ENCODE measurements at regions of chr4 and their contacts with region 1.

Region 1: DNA sequence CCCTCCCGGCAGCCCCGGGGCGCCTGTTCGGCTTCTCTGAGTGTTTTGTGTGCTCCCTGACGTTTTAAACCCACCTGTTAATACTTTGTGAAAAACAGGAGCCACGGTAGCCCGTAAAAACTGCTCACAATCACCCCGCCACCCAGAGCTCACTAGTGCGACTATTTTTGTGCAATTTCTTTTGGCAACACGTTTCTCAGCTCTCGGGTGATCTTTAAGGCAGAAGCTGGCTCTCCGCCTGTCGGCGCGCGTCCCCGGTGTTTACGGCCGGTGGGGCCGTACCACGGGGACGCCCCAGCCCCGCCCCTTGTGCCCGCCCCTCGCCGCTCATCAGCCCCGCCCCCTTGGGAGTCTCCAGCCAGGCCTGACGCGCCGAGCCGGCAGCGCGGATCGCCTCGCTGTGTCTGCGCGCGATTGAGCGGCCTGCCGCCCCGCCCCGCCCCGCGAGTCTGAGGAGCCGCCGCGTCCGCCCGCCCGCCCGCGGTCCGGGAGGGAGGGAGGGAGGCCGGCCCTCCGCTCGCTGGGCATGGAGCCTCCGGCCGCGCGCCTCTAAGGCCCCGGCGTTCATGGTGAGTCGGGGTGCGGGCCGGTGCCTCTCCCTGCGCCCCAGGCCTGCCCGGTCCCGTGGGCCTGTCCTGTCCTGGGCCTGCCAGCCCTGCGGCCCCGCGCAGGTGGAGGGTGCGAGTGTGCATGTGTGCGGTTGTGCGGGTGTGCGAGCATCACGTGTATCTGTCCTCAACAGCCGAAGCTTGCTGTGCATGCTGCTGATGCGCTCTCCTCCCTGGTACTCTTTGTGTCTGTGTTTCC is 56.2 kb upstream of the TADA2B start:
- DNase-seq: peak; percentile 88 to 98 (median 92)
- ATAC-seq: peak; percentile 90
- H3K4me3 ChIP-seq: peak overlapping the region; percentile 88
- H3K4me3 Mint-ChIP-seq: peak overlapping the region; percentile 97
- H3K27ac ChIP-seq: peak overlapping the region; percentile 78 to 93
- H3K27ac Mint-ChIP-seq: peak overlapping the region; percentile 95
- H3K4me1 ChIP-seq: peaks cover 64% of the 10 kb centered on the region
- H3K4me1 Mint-ChIP-seq: peaks cover 67% of the 10 kb centered on the region
- H3K27me3 ChIP-seq: no peaks in the 10 kb centered on the region
- H3K27me3 Mint-ChIP-seq: no peaks in the 10 kb centered on the region
- CTCF ChIP-seq: no peak

Region 2: GRCh38 chr4:6343950-6344408 is 643.0 kb before region 1 on chr4:
- CTCF ChIA-PET with region 1: no interaction called
- POLR2A ChIA-PET with region 1: no interaction called
- intact Hi-C with region 1: no loop called
- DNase-seq: no peak
- ATAC-seq: no peak
- H3K4me3 ChIP-seq: no peak overlapping the region
- H3K4me3 Mint-ChIP-seq: no peak overlapping the region
- H3K27ac ChIP-seq: no peak overlapping the region
- H3K27ac Mint-ChIP-seq: no peak overlapping the region
- H3K4me1 ChIP-seq: peaks cover 4% of the 10 kb centered on the region
- H3K4me1 Mint-ChIP-seq: no peaks in the 10 kb centered on the region
- H3K27me3 ChIP-seq: peaks cover 3 to 5% of the 10 kb centered on the region in 2 experiments
- H3K27me3 Mint-ChIP-seq: peaks cover 23% of the 10 kb centered on the region
- CTCF ChIP-seq: no peak

Region 3: DNA sequence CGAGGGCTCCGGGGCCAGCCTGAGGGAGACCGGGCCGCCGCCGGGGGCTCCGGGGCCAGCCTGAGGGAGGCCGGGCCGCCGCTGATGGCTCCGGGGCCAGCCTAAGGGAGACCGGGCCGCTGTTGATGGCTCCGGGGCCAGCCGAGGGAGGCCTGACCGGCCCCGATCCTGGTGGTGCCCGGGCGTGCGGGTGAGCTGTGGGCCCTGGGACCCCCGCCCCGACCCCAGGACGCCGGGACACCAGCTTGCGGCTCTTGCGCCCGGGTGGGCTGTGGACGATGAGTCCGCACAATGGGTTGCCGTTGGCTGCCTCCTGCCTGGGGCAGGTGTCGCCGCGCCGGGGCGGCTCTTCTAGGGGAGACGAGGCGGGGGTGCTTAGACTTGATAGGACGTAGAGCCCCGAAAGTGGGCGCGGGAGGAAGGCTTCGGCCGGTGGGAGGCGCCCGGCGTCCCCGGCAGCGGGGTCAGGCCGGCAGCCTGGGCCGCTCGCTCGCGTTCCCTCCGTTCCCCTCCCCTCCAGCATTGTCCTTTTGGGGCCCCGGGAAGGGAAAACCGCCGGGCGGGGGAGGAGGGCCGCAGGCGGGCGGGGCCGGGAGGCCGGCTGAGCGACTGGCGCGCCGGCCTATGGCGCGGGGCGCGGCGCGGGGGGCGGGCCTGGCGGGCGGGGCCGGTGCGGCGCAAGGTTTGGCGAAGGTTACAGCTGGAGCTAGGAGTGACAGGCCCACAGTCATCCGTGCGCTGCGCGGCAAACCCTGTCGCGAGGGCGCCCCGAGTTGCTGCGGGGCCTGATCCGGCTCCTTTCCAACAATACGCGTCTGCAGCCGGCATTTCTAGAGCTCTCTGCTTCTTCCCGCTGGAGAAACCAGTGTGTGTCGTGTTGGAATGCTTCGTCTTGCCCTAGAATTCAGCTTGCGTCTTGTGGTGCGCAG is 203.7 kb before region 1 on chr4:
- CTCF ChIA-PET with region 1: no interaction called
- POLR2A ChIA-PET with region 1: interaction called, 5 read pairs
- intact Hi-C with region 1: loop called in 1 of 2 experiments (anchors 2 kb)
- DNase-seq: peak; percentile 78 to 94 (median 86)
- ATAC-seq: peak; percentile 78
- H3K4me3 ChIP-seq: peak overlapping the region; percentile 77
- H3K4me3 Mint-ChIP-seq: peak overlapping the region; percentile 92
- H3K27ac ChIP-seq: peak overlapping the region; percentile 92 to 96
- H3K27ac Mint-ChIP-seq: peak overlapping the region; percentile 86
- H3K4me1 ChIP-seq: peaks cover 43% of the 10 kb centered on the region
- H3K4me1 Mint-ChIP-seq: peaks cover 59% of the 10 kb centered on the region
- H3K27me3 ChIP-seq: no peaks in the 10 kb centered on the region
- H3K27me3 Mint-ChIP-seq: no peaks in the 10 kb centered on the region
- CTCF ChIP-seq: no peak

Region 4: GRCh38 chr4:6909073-6909965 is 77.7 kb before region 1 on chr4 and contains the start of gene TBC1D14:
- CTCF ChIA-PET with region 1: interaction called, 8 read pairs
- POLR2A ChIA-PET with region 1: interaction called, 78 read pairs
- intact Hi-C with region 1: loop called (anchors 1 kb)
- DNase-seq: peak; percentile 77 to 93 (median 84)
- ATAC-seq: peak; percentile 88
- H3K4me3 ChIP-seq: peak within 1 kb of the TSS; percentile 91
- H3K4me3 Mint-ChIP-seq: peak within 1 kb of the TSS; percentile 96
- H3K27ac ChIP-seq: peak within 1 kb of the TSS; percentile 92 to 96
- H3K27ac Mint-ChIP-seq: peak within 1 kb of the TSS; percentile 90
- H3K4me1 ChIP-seq: peaks cover 61% of the 10 kb centered on the region
- H3K4me1 Mint-ChIP-seq: peaks cover 48% of the 10 kb centered on the region
- H3K27me3 ChIP-seq: no peaks in the 10 kb centered on the region
- H3K27me3 Mint-ChIP-seq: no peaks in the 10 kb centered on the region
- CTCF ChIP-seq: no peak
- total RNA-seq, gene TBC1D14: 31.2 to 34.1 TPM

Region 5: GRCh38 chr4:6926681-6927478 is 60.1 kb before region 1 on chr4:
- CTCF ChIA-PET with region 1: interaction called, 3 read pairs
- POLR2A ChIA-PET with region 1: interaction called, 14 read pairs
- intact Hi-C with region 1: no loop called
- DNase-seq: peak; percentile 42 to 85 (median 67)
- ATAC-seq: peak; percentile 97
- H3K4me3 ChIP-seq: peak overlapping the region; percentile 10
- H3K4me3 Mint-ChIP-seq: peak overlapping the region; percentile 83
- H3K27ac ChIP-seq: peak overlapping the region; percentile 28 to 57
- H3K27ac Mint-ChIP-seq: peak overlapping the region; percentile 92
- H3K4me1 ChIP-seq: peaks cover 79% of the 10 kb centered on the region
- H3K4me1 Mint-ChIP-seq: peaks cover 81% of the 10 kb centered on the region
- H3K27me3 ChIP-seq: no peaks in the 10 kb centered on the region
- H3K27me3 Mint-ChIP-seq: no peaks in the 10 kb centered on the region
- CTCF ChIP-seq: no peak

Region 6: DNA sequence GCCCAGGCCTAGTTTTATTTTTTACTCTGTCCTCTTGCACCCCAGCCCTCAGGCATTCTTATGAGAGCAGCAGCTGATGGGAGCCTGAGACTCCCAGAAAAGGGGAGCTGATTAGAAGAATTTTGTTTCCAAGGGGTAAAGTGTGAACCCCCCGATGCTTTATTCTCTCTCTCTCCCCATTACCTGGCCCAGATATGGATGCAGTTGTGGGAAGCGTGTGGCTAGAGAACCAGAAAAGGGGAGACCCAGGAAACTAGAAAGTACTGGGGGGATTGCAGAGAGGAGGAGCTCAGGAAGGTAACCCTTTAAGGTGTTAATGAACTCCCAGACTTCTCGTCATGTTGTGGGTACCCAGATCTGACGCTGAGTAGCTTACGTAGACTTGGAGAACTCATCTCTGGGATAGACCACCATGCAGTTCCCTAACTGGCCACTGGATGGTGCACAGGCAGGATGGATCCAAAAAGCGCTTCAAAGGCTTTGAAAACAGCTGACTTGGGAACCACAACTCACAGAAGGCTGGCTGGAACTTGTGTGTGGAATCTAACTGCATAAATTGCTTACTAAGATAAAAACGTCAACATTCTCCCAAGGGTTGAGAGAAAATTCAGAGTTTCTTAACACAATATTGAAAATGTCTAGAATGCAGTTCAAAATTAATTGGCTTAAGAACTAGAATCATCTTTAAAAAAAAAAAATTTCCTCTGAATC is 12.7 kb before region 1 on chr4:
- CTCF ChIA-PET with region 1: interaction called, 24 read pairs
- POLR2A ChIA-PET with region 1: interaction called, 14 read pairs
- intact Hi-C with region 1: no loop called
- DNase-seq: peak; percentile 56 to 89 (median 77)
- ATAC-seq: peak; percentile 98
- H3K4me3 ChIP-seq: no peak overlapping the region
- H3K4me3 Mint-ChIP-seq: no peak overlapping the region
- H3K27ac ChIP-seq: no peak overlapping the region
- H3K27ac Mint-ChIP-seq: peak overlapping the region; percentile 49
- H3K4me1 ChIP-seq: peaks cover 6% of the 10 kb centered on the region
- H3K4me1 Mint-ChIP-seq: peaks cover 15% of the 10 kb centered on the region
- H3K27me3 ChIP-seq: no peaks in the 10 kb centered on the region
- H3K27me3 Mint-ChIP-seq: no peaks in the 10 kb centered on the region
- CTCF ChIP-seq: peak; percentile 93

Region 7: DNA sequence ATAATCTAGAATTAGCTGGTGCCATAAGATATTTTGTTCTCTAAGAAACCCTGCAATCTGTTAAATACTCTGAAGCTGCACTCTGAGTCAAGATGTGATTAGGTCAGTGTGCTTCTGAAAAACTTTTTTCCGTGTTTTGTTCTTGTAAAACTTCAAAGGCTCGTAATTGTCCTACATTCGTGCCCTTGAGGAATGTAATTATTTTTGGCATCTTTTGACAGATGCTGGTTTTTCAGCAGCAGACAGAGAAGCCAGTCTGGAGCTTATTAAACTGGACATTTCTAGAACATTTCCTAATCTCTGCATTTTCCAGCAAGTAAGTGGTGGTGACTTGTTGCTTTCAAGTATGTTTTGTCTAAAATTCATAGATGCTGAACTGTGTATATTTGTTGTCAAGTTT is 19.4 kb after region 1 on chr4:
- CTCF ChIA-PET with region 1: no interaction called
- POLR2A ChIA-PET with region 1: no interaction called
- intact Hi-C with region 1: no loop called
- DNase-seq: no peak
- ATAC-seq: no peak
- H3K4me3 ChIP-seq: no peak overlapping the region
- H3K4me3 Mint-ChIP-seq: no peak overlapping the region
- H3K27ac ChIP-seq: no peak overlapping the region
- H3K27ac Mint-ChIP-seq: no peak overlapping the region
- H3K4me1 ChIP-seq: no peaks in the 10 kb centered on the region
- H3K4me1 Mint-ChIP-seq: no peaks in the 10 kb centered on the region
- H3K27me3 ChIP-seq: no peaks in the 10 kb centered on the region
- H3K27me3 Mint-ChIP-seq: no peaks in the 10 kb centered on the region
- CTCF ChIP-seq: no peak